B cell (primary cell): ENCODE measurements at regions of chr21 and their contacts with region 1.

Region 1: DNA sequence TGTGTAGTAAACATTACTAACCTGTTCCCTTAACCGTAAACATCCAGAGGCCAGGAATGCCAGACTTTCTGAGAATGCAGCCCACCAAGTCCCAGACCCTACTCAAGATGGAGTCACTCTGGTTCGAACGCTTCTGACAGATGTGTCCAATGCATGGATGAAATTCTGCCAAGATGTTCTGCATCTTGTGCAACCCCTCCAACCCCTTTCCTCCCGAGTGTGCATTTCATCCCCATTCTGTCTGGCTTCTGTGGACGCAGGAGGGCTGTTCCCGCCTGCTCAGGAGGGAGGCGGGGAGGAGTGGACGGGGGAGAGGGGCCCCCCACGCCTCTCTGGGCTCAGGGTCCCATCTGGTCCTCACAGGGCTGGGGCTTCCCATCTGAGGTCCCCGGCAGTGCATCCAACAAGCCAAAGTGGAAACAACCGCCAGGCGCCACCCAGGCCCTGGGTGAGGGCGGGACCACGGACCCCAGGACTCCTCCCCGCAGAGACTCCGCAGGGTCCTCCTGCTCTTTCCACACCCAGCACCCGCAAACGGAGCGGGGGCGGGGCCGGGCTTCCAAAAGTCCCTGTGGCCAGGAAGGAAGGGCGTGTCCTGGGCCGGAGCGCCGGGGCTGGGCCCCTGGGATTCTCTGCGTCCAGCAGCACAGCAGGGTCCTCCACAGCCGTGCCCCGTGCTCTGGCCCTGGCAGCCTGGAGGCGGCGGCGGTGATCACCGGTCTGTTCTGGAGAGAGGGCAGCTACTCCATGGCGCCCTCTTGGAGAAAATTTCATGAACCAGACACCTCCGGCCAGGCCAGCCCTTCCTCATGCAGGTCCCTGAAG is 27.7 kb upstream of the SUMO3 start:
- DNase-seq: peak; percentile 67
- ATAC-seq: peak; percentile 52
- H3K4me3 ChIP-seq: peak overlapping the region in 4 of 5 experiments; percentile 29 to 52 (median 46)
- H3K4me3 Mint-ChIP-seq: peak overlapping the region; percentile 69
- H3K27ac ChIP-seq: peak overlapping the region in 1 of 2 donors; percentile 9
- H3K27ac Mint-ChIP-seq: no peak overlapping the region
- H3K4me1 ChIP-seq: peaks cover 16 to 17% of the 10 kb centered on the region in 2 donors
- H3K4me1 Mint-ChIP-seq: peaks cover 18% of the 10 kb centered on the region
- H3K27me3 ChIP-seq: peaks cover 0 to 16% (median 2%) of the 10 kb centered on the region in 4 experiments
- H3K27me3 Mint-ChIP-seq: peaks cover 25% of the 10 kb centered on the region
- CTCF ChIP-seq: peak; percentile 31

Region 2: DNA sequence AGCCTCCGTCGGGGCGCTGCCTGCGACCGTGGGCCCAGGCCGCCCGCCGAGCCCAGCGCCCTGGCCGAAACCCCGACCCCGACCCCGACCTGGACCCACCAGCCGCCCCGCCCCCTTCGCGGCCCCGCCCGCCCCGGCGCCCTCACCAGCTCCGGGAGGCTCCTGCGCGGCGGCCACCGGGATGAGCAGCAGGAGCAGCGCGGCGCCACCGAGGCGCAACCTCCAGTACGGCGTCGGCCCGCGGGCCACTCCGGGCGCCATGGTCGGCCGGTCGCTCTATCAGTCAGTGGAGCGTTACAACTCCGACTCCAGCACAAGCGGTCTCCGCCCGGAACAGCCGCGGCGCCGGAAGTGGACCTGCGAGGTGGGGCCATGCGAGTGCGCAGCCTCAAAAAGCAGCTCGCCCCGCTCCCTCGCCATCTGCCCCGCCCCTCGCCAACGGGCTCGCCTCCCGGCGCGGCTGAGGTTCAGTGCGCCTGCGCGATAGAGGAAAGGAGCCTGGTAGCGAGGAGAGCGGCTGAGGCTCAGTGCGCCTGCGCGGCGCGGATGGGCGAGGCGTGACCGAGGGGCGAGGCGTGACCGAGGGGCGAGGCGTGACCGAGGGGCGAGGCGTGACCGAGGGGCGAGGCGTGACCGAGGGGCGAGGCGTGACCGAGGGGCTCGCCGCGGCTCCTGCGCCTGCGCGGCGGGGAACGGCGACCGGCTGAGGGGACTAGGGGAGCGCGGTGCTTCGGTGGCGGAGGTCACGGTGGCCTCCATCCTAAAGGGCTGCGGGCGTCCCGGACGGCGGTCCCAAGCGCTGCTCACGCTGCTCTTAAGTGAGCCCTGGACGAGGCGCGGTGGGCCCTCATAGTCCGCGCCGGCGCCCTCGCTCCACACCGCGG is 28.0 kb after region 1 on chr21 and contains the start of gene PTTG1IP:
- CTCF ChIA-PET with region 1: interaction called, 12 read pairs
- POLR2A ChIA-PET with region 1: no interaction called
- intact Hi-C with region 1: no loop called
- DNase-seq: peak; percentile 99
- ATAC-seq: peak; percentile 83
- H3K4me3 ChIP-seq: peak within 1 kb of the TSS; percentile 73 to 92 (median 81)
- H3K4me3 Mint-ChIP-seq: peak within 1 kb of the TSS; percentile 92
- H3K27ac ChIP-seq: peak within 1 kb of the TSS; percentile 80 to 93
- H3K27ac Mint-ChIP-seq: peak within 1 kb of the TSS; percentile 98
- H3K4me1 ChIP-seq: peaks cover 50 to 56% of the 10 kb centered on the region in 2 donors
- H3K4me1 Mint-ChIP-seq: peaks cover 60% of the 10 kb centered on the region
- H3K27me3 ChIP-seq: no peaks in the 10 kb centered on the region
- H3K27me3 Mint-ChIP-seq: no peaks in the 10 kb centered on the region
- CTCF ChIP-seq: no peak
- total RNA-seq, gene PTTG1IP: 58.6 and 62.9 TPM in 2 replicates